Activated CD4-positive, alpha-beta memory T cell treated with anti-CD3 and anti-CD28 coated beads for 36 hours (primary cell): ENCODE measurements at regions of chr6 and their contacts with region 1.

Region 1: DNA sequence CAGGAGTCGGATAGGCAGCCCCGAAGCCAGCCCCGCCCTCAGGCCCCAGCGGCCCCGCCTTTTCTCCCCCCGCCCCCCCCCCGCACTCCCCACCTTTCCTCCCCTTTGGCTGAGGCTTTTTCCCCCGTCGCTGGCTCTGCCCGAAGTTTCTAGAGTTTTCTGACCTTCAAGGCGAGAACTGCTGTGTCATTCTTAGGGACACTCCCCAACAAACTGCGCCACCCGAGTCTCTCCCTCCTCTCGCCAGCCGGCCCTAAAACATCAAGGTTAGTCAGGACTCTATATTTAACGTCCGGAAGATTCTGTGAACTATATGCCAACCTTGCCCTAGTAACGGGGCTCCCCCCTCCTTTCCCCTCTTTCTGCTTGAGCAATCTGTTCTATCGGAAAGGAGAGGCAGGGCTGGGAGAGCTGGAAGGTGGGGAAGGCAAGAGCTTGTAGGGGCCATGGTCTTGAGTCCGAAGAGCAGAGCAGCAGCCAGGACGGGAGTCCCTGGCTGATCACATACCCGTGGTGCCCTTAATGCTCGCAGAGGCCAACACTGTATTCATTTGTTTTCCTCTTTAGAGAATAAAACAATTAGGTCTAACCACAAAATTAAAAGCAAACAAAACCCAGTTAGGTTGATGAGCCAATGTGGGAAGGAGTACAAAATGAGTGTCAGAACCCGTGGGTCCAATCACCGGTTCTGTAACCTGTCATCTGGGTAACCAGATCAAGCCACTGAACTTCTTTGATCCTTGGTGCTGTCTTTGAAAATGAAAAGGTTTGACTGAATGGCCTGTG is 5.3 kb upstream of the HSPA1B start:
- DNase-seq: peak; percentile 84
- H3K4me3 Mint-ChIP-seq: peak overlapping the region; percentile 89
- H3K27ac Mint-ChIP-seq: peak overlapping the region; percentile 96
- H3K4me1 Mint-ChIP-seq: peaks cover 70% of the 10 kb centered on the region
- H3K27me3 Mint-ChIP-seq: no peaks in the 10 kb centered on the region

Region 2: GRCh38 chr6:31776989-31777666 is 45.1 kb before region 1 on chr6 and contains the start of gene VWA7:
- CTCF ChIA-PET with region 1: no interaction called
- POLR2A ChIA-PET with region 1: no interaction called
- intact Hi-C with region 1: loop called (anchors 5 kb)
- DNase-seq: peak; percentile 91
- H3K4me3 Mint-ChIP-seq: peak within 1 kb of the TSS; percentile 26
- H3K27ac Mint-ChIP-seq: peak within 1 kb of the TSS; percentile 74
- H3K4me1 Mint-ChIP-seq: peaks cover 36% of the 10 kb centered on the region
- H3K27me3 Mint-ChIP-seq: no peaks in the 10 kb centered on the region
- total RNA-seq, gene VWA7: 2.0 to 2.1 TPM

Region 3: DNA sequence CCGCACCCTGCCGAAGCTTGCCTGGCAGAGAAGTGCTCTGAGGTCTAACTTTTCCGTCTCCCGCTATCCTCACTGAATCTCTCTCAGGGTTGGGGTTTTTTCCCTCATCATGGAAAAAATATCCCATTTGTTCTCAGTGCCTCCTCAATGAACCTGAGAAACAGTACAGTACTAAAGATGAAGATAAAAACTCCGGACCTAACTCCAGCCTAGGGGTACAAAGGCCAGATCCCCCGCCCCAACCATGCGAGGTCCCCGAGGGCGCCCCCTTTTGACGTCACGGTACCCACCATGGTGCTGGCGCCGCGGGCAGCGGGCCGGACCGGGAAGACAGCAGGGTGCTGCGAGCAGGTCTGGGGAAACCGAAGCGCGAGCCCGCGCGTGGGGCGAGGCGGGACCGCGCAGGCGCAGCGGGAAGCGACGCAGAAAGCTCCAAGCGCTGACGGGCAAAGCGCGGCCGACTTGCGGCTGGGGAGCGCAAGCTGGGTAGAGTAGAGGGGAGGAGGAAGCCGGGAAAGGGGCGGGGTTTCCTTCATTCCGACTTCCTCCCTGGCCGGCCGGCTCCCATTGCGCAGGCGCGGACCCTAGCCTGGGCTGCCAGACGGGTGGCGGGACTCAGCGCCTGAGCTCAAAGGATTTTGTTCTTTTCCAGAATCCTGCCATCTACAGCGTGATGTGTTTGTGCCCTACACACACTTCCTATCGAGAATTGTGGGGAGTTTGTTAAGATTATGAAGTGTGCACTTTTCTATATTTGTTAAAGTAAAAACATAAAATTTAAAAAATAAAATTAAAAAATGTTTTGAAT is 15.6 kb before region 1 on chr6 and contains the start of gene LSM2:
- CTCF ChIA-PET with region 1: interaction called, 7 read pairs
- POLR2A ChIA-PET with region 1: interaction called, 26 read pairs
- intact Hi-C with region 1: loop called (anchors 2 kb)
- DNase-seq: peak; percentile 98
- H3K4me3 Mint-ChIP-seq: peak within 1 kb of the TSS; percentile 86
- H3K27ac Mint-ChIP-seq: peak within 1 kb of the TSS; percentile 87
- H3K4me1 Mint-ChIP-seq: peaks cover 30% of the 10 kb centered on the region
- H3K27me3 Mint-ChIP-seq: no peaks in the 10 kb centered on the region
- total RNA-seq, gene LSM2: 142 to 143 TPM

Region 4: DNA sequence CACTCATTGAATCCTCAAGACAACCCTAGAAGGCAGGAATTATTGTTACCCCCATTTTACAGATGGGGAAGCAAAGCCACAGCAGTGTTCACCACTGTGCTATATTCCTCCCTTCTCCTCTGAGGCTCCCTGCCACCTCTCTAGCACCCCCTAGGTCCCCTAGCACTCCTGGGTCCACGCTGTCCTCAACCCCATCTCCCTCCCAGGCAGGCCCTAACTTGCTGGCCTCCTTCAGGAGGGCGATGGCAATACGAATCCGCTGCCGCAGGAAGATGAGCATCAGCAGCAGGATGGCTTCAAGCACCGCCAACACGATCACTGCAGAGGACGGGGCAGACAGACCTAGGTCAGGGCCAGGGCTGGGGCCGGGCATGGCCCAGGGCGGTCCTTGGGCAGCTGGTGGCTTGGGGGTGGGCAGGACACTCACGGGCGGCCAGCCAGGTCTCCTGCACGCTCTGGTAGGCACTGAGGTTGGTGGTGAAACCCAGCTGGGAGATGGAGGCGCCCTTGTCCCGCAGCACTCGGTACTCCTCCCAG is 48.2 kb after region 1 on chr6:
- CTCF ChIA-PET with region 1: no interaction called
- POLR2A ChIA-PET with region 1: no interaction called
- intact Hi-C with region 1: no loop called
- DNase-seq: no peak
- H3K4me3 Mint-ChIP-seq: no peak overlapping the region
- H3K27ac Mint-ChIP-seq: no peak overlapping the region
- H3K4me1 Mint-ChIP-seq: no peaks in the 10 kb centered on the region
- H3K27me3 Mint-ChIP-seq: no peaks in the 10 kb centered on the region